B cell (primary cell): ENCODE measurements at regions of chr3 and their contacts with region 1.

Region 1: DNA sequence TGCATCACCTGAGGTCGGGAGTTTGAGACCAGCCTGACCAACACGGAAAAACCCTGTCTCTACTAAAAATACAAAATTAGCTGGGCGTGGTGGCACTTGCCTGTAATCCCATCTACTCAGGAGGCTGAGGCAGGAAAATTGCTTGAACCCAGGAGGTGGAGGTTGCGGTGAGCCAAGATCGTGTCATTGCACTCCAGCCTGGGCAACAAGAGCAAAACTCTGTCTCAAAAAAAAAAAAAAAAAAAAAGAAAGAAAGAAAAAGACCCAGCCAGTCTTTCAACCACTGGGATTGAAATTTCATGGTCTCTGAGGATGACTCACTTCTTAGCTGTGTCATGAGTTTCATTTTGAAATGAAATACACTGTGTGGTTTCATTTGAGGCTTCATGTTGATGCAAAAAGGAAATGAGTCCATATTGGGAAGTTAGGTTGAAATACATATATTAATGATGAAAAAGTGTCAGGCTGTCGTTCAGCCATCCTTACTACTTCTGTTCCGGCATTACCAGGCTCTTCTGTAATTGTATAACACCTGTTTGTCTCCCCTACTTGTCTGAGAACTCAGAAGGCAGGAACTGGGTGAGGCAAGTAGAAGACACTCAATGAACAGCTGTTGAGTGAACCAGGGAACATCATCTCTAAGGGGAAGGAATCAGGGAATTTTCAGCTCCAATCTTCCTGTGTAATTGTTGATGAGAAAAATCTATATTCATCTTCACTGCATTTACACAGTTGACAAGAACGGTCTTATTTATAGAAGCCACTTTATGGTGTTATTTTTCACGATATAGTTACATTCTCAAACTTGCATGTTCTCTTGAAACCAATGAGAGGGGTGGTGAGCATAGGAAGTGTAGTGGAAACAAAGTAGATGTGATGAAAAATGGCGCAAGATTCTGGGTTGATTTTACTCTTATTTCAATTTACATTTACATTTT is 87.4 kb downstream of the NFKBIZ start:
- DNase-seq: peak; percentile 82
- ATAC-seq: peak; percentile 86
- H3K4me3 ChIP-seq: peak overlapping the region in 2 of 5 experiments; percentile 24 to 32
- H3K4me3 Mint-ChIP-seq: peak overlapping the region; percentile 74
- H3K27ac ChIP-seq: peak overlapping the region; percentile 56
- H3K27ac Mint-ChIP-seq: peak overlapping the region; percentile 90
- H3K4me1 ChIP-seq: peaks cover 56 to 64% of the 10 kb centered on the region in 2 donors
- H3K4me1 Mint-ChIP-seq: peaks cover 33% of the 10 kb centered on the region
- H3K27me3 ChIP-seq: no peaks in the 10 kb centered on the region
- H3K27me3 Mint-ChIP-seq: no peaks in the 10 kb centered on the region
- CTCF ChIP-seq: no peak

Region 2: GRCh38 chr3:101827211-101828174 is 109.2 kb before region 1 on chr3:
- CTCF ChIA-PET with region 1: no interaction called
- POLR2A ChIA-PET with region 1: interaction called, 4 read pairs
- intact Hi-C with region 1: loop called (anchors 2 kb)
- DNase-seq: peak; percentile 93
- ATAC-seq: peak; percentile 90
- H3K4me3 ChIP-seq: peak overlapping the region; percentile 58 to 83 (median 62)
- H3K4me3 Mint-ChIP-seq: peak overlapping the region; percentile 90
- H3K27ac ChIP-seq: peak overlapping the region; percentile 93 to 97
- H3K27ac Mint-ChIP-seq: peak overlapping the region; percentile 96
- H3K4me1 ChIP-seq: peaks cover 44 to 45% of the 10 kb centered on the region in 2 donors
- H3K4me1 Mint-ChIP-seq: peaks cover 58% of the 10 kb centered on the region
- H3K27me3 ChIP-seq: no peaks in the 10 kb centered on the region
- H3K27me3 Mint-ChIP-seq: no peaks in the 10 kb centered on the region
- CTCF ChIP-seq: no peak

Region 3: DNA sequence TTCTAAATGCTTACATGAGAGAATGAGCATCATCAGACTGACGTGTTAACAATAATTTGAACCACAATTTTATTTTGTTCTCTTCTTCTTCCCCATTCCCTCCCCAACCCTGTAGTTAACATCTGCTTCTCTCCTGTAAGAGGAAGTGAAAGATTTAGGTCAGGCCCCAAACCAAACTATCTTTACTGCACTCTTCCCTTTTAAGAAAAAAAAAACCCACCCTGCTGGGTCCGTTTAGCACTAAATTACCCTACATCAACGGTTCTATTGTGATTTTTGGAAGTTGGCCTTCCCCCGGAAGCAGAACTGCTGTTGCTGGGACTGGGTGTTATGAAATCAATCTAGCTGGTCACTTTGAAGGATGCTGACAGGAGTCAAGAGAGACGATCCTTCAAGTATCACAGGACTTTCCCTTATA is 37.9 kb before region 1 on chr3:
- CTCF ChIA-PET with region 1: interaction called, 7 read pairs
- POLR2A ChIA-PET with region 1: interaction called, 9 read pairs
- intact Hi-C with region 1: loop called (anchors 1 kb)
- DNase-seq: peak; percentile 86
- ATAC-seq: peak; percentile 94
- H3K4me3 ChIP-seq: peak overlapping the region in 1 of 5 experiments; percentile 1
- H3K4me3 Mint-ChIP-seq: peak overlapping the region; percentile 46
- H3K27ac ChIP-seq: peak overlapping the region; percentile 86 to 90
- H3K27ac Mint-ChIP-seq: peak overlapping the region; percentile 62
- H3K4me1 ChIP-seq: peaks cover 29 to 32% of the 10 kb centered on the region in 2 donors
- H3K4me1 Mint-ChIP-seq: peaks cover 36% of the 10 kb centered on the region
- H3K27me3 ChIP-seq: no peaks in the 10 kb centered on the region
- H3K27me3 Mint-ChIP-seq: no peaks in the 10 kb centered on the region
- CTCF ChIP-seq: no peak

Region 4: DNA sequence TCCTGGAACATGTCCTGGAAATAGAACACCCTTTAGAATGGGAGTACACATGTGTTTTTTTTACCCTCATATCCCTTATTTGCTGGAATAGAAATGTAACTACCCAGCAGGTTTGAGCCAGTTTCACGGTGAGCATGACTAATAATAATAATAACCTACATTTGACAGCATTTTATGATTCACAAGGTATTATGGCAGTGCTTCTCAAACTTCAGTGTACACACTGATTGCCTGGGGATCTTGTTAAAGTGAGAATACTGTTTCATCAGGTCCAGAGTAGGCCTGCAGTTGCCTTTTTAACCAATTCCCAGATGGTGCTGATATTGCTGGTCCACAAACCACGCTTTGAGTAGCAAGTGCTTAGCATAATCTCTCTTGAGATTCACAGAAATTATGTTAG is 23.5 kb before region 1 on chr3:
- CTCF ChIA-PET with region 1: no interaction called
- POLR2A ChIA-PET with region 1: interaction called, 4 read pairs
- intact Hi-C with region 1: loop called (anchors 2 kb)
- DNase-seq: no peak
- ATAC-seq: no peak
- H3K4me3 ChIP-seq: no peak overlapping the region
- H3K4me3 Mint-ChIP-seq: no peak overlapping the region
- H3K27ac ChIP-seq: no peak overlapping the region
- H3K27ac Mint-ChIP-seq: no peak overlapping the region
- H3K4me1 ChIP-seq: no peaks in the 10 kb centered on the region
- H3K4me1 Mint-ChIP-seq: peaks cover 7% of the 10 kb centered on the region
- H3K27me3 ChIP-seq: no peaks in the 10 kb centered on the region
- H3K27me3 Mint-ChIP-seq: no peaks in the 10 kb centered on the region
- CTCF ChIP-seq: no peak

Region 5: GRCh38 chr3:101995371-101996046 is 58.8 kb after region 1 on chr3:
- CTCF ChIA-PET with region 1: no interaction called
- POLR2A ChIA-PET with region 1: no interaction called
- intact Hi-C with region 1: no loop called
- DNase-seq: no peak
- ATAC-seq: no peak
- H3K4me3 ChIP-seq: no peak overlapping the region
- H3K4me3 Mint-ChIP-seq: no peak overlapping the region
- H3K27ac ChIP-seq: no peak overlapping the region
- H3K27ac Mint-ChIP-seq: no peak overlapping the region
- H3K4me1 ChIP-seq: peaks cover 18 to 19% of the 10 kb centered on the region in 2 donors
- H3K4me1 Mint-ChIP-seq: peaks cover 31% of the 10 kb centered on the region
- H3K27me3 ChIP-seq: no peaks in the 10 kb centered on the region
- H3K27me3 Mint-ChIP-seq: no peaks in the 10 kb centered on the region
- CTCF ChIP-seq: no peak

Region 6: GRCh38 chr3:102038477-102039142 is 101.9 kb after region 1 on chr3:
- CTCF ChIA-PET with region 1: no interaction called
- POLR2A ChIA-PET with region 1: interaction called, 5 read pairs
- intact Hi-C with region 1: loop called (anchors 5 kb)
- DNase-seq: peak; percentile 66
- ATAC-seq: peak; percentile 66
- H3K4me3 ChIP-seq: peak overlapping the region in 1 of 5 experiments; percentile 35
- H3K4me3 Mint-ChIP-seq: peak overlapping the region; percentile 49
- H3K27ac ChIP-seq: peak overlapping the region; percentile 51 to 79
- H3K27ac Mint-ChIP-seq: peak overlapping the region; percentile 87
- H3K4me1 ChIP-seq: peaks cover 28 to 34% of the 10 kb centered on the region in 2 donors
- H3K4me1 Mint-ChIP-seq: peaks cover 41% of the 10 kb centered on the region
- H3K27me3 ChIP-seq: no peaks in the 10 kb centered on the region
- H3K27me3 Mint-ChIP-seq: no peaks in the 10 kb centered on the region
- CTCF ChIP-seq: no peak

Region 7: DNA sequence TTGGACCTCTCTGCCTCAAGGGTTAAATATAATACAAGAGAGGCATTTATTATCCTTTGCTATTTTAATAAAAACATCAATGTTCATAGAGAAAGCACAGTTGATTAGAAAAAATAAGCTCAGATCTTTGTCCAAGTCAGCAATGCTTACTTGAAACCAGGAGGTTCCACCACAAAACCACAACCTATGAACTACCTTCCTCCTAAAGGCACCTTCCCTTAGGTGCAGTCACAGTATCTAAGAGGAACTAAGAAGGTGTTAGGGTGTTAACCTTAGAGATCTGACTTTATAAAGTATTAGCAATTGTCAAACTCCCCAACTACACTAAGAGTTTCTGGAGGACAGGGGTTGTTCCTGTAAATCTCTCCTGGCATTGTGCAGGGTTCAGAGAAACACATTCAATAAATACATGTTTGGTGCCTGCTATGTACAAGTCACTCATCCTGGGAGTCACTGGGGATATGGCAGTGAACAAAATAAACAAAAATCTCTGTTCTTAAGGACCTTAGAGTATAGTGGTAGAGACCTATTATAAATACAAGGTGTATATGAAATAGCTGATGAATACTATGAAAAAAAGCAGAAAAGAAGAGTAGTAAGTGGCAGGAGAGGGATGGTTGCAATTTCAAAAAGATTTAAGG is 121.2 kb after region 1 on chr3:
- CTCF ChIA-PET with region 1: no interaction called
- POLR2A ChIA-PET with region 1: interaction called, 4 read pairs
- intact Hi-C with region 1: loop called (anchors 5 kb)
- DNase-seq: peak; percentile 80
- ATAC-seq: peak; percentile 82
- H3K4me3 ChIP-seq: no peak overlapping the region
- H3K4me3 Mint-ChIP-seq: peak overlapping the region; percentile 57
- H3K27ac ChIP-seq: peak overlapping the region; percentile 9 to 39
- H3K27ac Mint-ChIP-seq: peak overlapping the region; percentile 43
- H3K4me1 ChIP-seq: peaks cover 38 to 39% of the 10 kb centered on the region in 2 donors
- H3K4me1 Mint-ChIP-seq: peaks cover 34% of the 10 kb centered on the region
- H3K27me3 ChIP-seq: no peaks in the 10 kb centered on the region
- H3K27me3 Mint-ChIP-seq: no peaks in the 10 kb centered on the region
- CTCF ChIP-seq: no peak